PC-3 (cell line): ENCODE measurements at regions of chr10 and their contacts with region 1.

Region 1: GRCh38 chr10:77301305-77301730 is 336.3 kb downstream of the KCNMA1 start:
- DNase-seq: peak; percentile 96
- ATAC-seq: 0 out of 2 replicates have a peak, but pooled peaks have one; percentile 1
- H3K4me3 ChIP-seq: no peak overlapping the region
- H3K27ac ChIP-seq: no peak overlapping the region
- H3K4me1 ChIP-seq: peaks cover 34% of the 10 kb centered on the region
- H3K27me3 ChIP-seq: no peaks in the 10 kb centered on the region
- CTCF ChIP-seq: no peak

Region 2: DNA sequence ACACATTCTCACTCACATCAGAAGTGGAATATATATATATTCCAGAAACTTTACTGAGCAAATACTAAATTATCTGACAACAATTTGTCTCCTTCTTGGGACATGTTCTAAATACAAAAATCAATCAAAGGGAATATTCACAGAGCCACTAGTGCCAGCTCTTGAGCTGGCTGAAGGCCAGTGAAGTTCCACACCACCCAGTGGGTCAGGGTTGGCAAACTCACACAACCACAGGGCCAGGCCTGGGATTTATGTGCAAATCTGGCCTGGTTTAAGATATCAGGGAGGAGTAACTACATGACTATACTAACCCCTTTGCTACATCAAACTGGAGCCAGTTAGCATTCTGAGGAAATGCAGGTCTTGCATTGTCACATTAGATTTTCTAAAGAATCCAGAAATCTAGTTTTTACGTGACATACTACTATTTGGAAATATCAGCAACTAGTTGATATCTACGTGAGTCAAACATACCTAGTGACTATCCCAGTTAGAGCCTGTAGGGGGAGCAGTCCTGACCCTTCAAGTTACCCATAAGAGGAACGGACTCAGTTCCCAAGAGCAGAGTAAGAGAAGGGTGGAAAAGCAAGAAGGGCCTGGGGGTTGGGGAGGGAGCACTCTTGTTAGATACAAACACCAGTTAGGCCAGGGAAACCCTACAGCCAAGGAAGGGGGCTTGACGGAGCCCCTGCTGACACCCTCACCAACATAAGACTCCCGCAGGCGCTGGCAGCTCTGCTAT is 264.2 kb before region 1 on chr10:
- CTCF ChIA-PET with region 1: no interaction called
- POLR2A ChIA-PET with region 1: no interaction called
- intact Hi-C with region 1: loop called (anchors 10 kb)
- DNase-seq: peak; percentile 74
- ATAC-seq: 0 out of 2 replicates have a peak, but pooled peaks have one; percentile 8
- H3K4me3 ChIP-seq: no peak overlapping the region
- H3K27ac ChIP-seq: no peak overlapping the region
- H3K4me1 ChIP-seq: peaks cover 7% of the 10 kb centered on the region
- H3K27me3 ChIP-seq: no peaks in the 10 kb centered on the region
- CTCF ChIP-seq: peak; percentile 100

Region 3: DNA sequence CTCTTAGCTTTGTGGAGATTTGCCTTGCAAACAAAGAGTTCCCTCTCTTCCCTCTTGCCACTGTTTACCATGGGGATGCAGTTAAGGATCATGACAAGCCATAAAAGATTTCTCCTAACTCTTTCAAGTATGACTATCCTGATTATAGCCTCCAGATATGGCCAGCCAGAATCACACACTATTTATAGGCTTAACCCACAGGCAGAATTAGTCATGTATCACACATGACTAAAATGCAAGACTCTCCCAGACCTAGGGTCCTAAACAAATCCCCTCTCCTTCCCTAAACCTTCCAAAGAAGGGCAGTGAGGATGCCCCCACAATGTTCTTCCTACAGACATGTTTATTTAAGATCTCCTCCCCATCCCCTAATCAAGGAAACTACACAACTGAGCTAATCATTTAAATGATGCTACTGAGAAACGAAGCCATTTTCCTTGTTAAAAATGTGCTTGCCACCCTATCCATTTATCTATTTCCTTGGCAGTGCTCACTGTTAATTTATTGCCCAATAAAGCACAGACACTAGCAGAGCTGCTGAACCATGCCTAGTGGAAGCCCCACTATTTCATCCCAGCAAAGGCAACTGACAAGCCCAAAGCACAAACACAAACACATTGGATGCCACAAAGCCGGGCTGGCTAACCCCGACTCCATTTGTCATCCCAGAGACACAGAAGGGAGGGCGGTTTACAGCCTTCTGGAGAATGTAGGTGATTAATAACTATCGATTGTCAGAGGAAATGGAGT is 27.1 kb before region 1 on chr10:
- CTCF ChIA-PET with region 1: interaction called, 4 read pairs
- POLR2A ChIA-PET with region 1: no interaction called
- intact Hi-C with region 1: loop called (anchors 1 kb)
- DNase-seq: peak; percentile 100
- ATAC-seq: peak; percentile 96
- H3K4me3 ChIP-seq: no peak overlapping the region; the same call in 1 of the 2 replicates
- H3K27ac ChIP-seq: peak overlapping the region; percentile 74
- H3K4me1 ChIP-seq: peaks cover 28% of the 10 kb centered on the region
- H3K27me3 ChIP-seq: no peaks in the 10 kb centered on the region
- CTCF ChIP-seq: no peak

Region 4: GRCh38 chr10:77350711-77351119 is 49.4 kb after region 1 on chr10:
- CTCF ChIA-PET with region 1: no interaction called
- POLR2A ChIA-PET with region 1: no interaction called
- intact Hi-C with region 1: loop called (anchors 2 kb)
- DNase-seq: peak; percentile 100
- ATAC-seq: peak; percentile 96
- H3K4me3 ChIP-seq: 0 out of 2 replicates have a peak overlapping the region, but pooled peaks have one; percentile 0
- H3K27ac ChIP-seq: peak overlapping the region; percentile 77
- H3K4me1 ChIP-seq: peaks cover 52% of the 10 kb centered on the region
- H3K27me3 ChIP-seq: no peaks in the 10 kb centered on the region
- CTCF ChIP-seq: 0 out of 2 replicates have a peak, but pooled peaks have one; percentile 18